ENCODE measurements at regions of chr1 and their contacts with region 1.

Region 1: GRCh38 chr1:186363891-186364290 is 11.2 kb downstream of the TPR start:
- DNase-seq: no peak
- ATAC-seq: no peak

Region 2: DNA sequence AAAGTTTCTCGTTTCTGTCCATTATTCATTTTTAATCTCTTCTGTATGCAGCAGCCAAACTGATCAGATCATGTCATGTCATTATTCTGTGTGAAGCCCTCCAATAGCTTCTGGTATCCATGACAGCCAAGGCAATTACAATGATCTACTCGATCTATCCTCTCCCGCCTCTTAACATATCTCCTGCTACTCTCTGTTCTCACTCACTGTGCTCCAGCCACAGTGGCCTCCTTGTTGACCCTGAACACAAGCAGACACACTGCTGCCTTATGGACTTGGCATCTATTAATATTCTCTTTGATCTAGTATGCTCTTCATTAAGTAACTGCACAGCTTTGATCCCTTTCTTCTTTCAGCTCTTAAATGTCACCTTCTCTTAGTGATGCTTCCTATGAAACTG is 48.3 kb before region 1 on chr1:
- intact Hi-C with region 1: loop called in 1 of 2 experiments (anchors 5 kb)
- DNase-seq: no peak
- ATAC-seq: no peak

Measured in left colon (tissue), 2 donors.